A673 (cell line): ENCODE measurements at regions of chr20 and their contacts with region 1.

Region 1: GRCh38 chr20:4951299-4951698 is 50.0 kb downstream of the SLC23A2 start:
- DNase-seq: peak; percentile 33
- H3K4me3 ChIP-seq: no peak overlapping the region
- H3K27ac ChIP-seq: peak overlapping the region; percentile 42
- H3K4me1 ChIP-seq: peaks cover 4% of the 10 kb centered on the region
- H3K27me3 ChIP-seq: no peaks in the 10 kb centered on the region
- CTCF ChIP-seq: no peak

Region 2: DNA sequence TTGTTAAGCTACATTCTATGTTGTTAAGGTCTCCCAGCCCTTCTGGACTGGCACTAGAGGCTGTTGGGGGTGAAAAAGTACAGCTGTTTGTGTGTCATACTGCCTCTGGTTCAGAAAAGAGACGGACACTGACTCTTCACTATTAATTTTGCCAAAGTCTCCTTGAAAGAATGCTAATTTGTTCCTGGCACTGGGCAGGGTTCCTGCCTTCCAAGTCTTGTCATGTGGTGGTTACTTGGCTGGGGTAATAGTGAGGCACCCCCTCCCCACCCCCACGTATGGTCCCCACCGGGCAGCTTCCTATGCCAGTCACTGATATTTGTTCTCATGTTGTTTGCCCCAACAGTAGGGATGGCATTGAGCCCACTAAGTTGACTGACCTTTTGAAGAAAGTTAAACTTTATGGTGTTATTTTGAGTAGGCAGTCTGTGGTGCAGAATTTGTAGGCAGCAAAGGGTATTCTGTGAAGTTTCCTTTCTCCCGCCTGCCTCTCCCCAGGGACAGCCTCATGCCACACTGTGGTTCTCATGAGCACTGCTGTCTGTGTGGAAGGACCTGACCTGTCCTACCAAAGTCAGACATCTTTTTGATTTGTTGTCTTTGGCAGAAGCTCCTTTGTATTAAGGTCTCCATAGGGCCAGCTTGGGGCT is 184.2 kb after region 1 on chr20:
- CTCF ChIA-PET with region 1: no interaction called
- POLR2A ChIA-PET with region 1: no interaction called
- intact Hi-C with region 1: no loop called
- DNase-seq: peak; percentile 29
- H3K4me3 ChIP-seq: no peak overlapping the region
- H3K27ac ChIP-seq: peak overlapping the region; percentile 58
- H3K4me1 ChIP-seq: peaks cover 32% of the 10 kb centered on the region
- H3K27me3 ChIP-seq: no peaks in the 10 kb centered on the region
- CTCF ChIP-seq: no peak

Region 3: DNA sequence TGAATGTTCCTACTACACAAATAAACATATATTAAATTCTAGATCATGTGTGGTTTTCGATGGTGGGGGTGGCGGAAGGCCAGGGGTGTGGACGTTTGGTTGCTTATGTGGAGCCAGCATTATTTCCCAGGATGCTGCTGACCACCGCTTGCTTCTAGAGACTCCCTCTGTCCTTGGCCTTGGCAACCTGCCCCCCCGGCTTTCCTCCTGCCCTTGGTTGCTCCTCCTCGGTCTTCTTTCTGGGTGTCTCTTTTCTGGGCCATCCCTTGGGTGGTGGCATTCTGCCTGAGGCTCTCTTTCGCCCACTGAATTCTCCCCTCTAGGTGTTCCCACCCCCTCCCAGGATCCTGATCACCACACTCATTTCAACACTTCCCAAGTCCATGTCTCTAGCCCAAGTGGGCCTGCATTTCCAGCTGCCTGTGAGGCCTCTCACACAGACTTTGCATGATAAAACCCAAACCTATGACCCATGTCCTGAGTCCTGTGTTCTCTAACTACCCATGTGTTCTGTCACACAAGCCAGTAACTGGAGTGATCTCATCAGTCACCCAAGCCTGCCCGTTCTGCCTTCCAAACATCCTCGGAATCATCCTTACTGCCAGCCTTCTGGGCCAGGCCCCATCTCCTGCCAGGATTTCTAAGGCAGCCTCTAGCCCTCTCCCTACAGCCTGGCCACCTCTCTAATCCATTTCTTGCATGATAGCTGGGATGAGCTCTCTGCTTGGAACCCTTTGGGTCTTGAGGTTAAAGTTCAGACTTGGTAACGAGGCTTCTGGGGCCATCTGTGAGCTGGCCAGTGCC is 246.8 kb after region 1 on chr20:
- CTCF ChIA-PET with region 1: no interaction called
- POLR2A ChIA-PET with region 1: interaction called, 14 read pairs
- intact Hi-C with region 1: no loop called
- DNase-seq: no peak
- H3K4me3 ChIP-seq: no peak overlapping the region
- H3K27ac ChIP-seq: no peak overlapping the region
- H3K4me1 ChIP-seq: no peaks in the 10 kb centered on the region
- H3K27me3 ChIP-seq: no peaks in the 10 kb centered on the region
- CTCF ChIP-seq: no peak